ENCODE measurements at regions of chr1 and their contacts with region 1.

Region 1: GRCh38 chr1:107142140-107142542 is 1.3 kb downstream of the NTNG1 start:
- DNase-seq: peak in 3 of 9 donors; percentile 14 to 17 (median 15)
- ATAC-seq: no peak
- H3K4me3 ChIP-seq: peak overlapping the region; percentile 51
- H3K4me3 Mint-ChIP-seq: peak overlapping the region in 9 of 10 donors; percentile 83 to 90 (median 85)
- H3K27ac ChIP-seq: no peak overlapping the region
- H3K27ac Mint-ChIP-seq: no peak overlapping the region
- H3K4me1 ChIP-seq: peaks cover 3 to 4% of the 10 kb centered on the region in 2 donors
- H3K4me1 Mint-ChIP-seq: peaks cover 14 to 27% (median 25%) of the 10 kb centered on the region in 7 donors
- H3K27me3 ChIP-seq: peaks cover 2 to 3% of the 10 kb centered on the region in 2 donors
- H3K27me3 Mint-ChIP-seq: peaks cover 66 to 78% (median 76%) of the 10 kb centered on the region in 5 donors

Region 2: DNA sequence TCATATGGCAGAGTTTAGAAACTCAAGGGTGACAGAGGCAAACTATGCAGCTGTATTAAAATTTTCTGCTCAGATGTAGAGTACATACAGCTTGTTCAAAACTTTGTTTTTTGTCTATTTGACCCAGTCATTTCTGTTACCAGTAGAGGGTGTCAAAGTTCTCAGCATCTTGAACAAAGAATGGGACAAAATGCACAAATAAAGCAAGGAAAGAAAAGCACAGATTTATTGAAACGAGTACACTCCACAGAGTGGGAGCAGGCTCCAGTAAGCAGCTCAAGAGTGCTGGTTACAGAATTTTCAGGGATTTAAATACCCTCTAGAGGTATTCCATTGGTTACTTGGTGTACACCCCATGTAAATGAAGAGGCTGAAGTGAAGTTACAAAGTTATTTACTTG is 94.6 kb before region 1 on chr1:
- CTCF ChIA-PET with region 1: interaction called, 5 read pairs
- POLR2A ChIA-PET with region 1: no interaction called
- intact Hi-C with region 1: loop called (anchors 1 to 2 kb)
- DNase-seq: no peak
- ATAC-seq: no peak
- H3K4me3 ChIP-seq: no peak overlapping the region
- H3K4me3 Mint-ChIP-seq: no peak overlapping the region
- H3K27ac ChIP-seq: no peak overlapping the region
- H3K27ac Mint-ChIP-seq: no peak overlapping the region
- H3K4me1 ChIP-seq: no peaks in the 10 kb centered on the region
- H3K4me1 Mint-ChIP-seq: peaks cover 0 to 2% (median 0%) of the 10 kb centered on the region in 7 donors
- H3K27me3 ChIP-seq: no peaks in the 10 kb centered on the region
- H3K27me3 Mint-ChIP-seq: peaks cover 13 to 22% (median 19%) of the 10 kb centered on the region in 5 donors

Region 3: DNA sequence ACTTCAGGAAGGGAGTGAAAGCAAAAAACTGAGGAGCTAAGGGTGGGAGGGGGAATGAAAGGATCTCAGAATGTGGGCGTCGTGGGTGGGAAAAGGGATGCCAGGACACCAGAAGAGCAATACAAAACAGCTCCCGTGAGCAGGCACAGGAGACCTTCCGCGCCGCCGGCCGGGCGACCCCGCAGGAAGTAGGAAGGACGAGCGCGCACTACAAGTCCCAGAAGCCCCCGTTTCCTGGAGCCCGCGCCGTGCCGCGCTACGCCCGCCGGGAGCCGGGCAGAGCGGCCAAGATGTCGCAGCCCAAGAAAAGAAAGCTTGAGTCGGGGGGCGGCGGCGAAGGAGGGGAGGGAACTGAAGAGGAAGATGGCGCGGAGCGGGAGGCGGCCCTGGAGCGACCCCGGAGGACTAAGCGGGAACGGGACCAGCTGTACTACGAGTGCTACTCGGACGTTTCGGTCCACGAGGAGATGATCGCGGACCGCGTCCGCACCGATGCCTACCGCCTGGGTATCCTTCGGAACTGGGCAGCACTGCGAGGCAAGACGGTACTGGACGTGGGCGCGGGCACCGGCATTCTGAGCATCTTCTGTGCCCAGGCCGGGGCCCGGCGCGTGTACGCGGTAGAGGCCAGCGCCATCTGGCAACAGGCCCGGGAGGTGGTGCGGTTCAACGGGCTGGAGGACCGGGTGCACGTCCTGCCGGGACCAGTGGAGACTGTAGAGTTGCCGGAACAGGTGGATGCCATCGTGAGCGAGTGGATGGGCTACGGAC is 85.5 kb before region 1 on chr1 and contains the start of gene PRMT6:
- CTCF ChIA-PET with region 1: no interaction called
- POLR2A ChIA-PET with region 1: no interaction called
- intact Hi-C with region 1: loop called in 1 of 2 experiments (anchors 2 kb)
- DNase-seq: peak; percentile 62 to 85 (median 82)
- ATAC-seq: peak; percentile 94
- H3K4me3 ChIP-seq: peak within 1 kb of the TSS; percentile 95
- H3K4me3 Mint-ChIP-seq: peak within 1 kb of the TSS; percentile 96 to 100 (median 98)
- H3K27ac ChIP-seq: peak within 1 kb of the TSS; percentile 80
- H3K27ac Mint-ChIP-seq: peak within 1 kb of the TSS; percentile 95 to 98 (median 97)
- H3K4me1 ChIP-seq: peaks cover 11 to 12% of the 10 kb centered on the region in 2 donors
- H3K4me1 Mint-ChIP-seq: peaks cover 19 to 41% (median 29%) of the 10 kb centered on the region in 7 donors
- H3K27me3 ChIP-seq: no peaks in the 10 kb centered on the region
- H3K27me3 Mint-ChIP-seq: no peaks in the 10 kb centered on the region
- total RNA-seq, gene PRMT6: 7.4 to 22.1 (median 17.5) TPM

Region 4: DNA sequence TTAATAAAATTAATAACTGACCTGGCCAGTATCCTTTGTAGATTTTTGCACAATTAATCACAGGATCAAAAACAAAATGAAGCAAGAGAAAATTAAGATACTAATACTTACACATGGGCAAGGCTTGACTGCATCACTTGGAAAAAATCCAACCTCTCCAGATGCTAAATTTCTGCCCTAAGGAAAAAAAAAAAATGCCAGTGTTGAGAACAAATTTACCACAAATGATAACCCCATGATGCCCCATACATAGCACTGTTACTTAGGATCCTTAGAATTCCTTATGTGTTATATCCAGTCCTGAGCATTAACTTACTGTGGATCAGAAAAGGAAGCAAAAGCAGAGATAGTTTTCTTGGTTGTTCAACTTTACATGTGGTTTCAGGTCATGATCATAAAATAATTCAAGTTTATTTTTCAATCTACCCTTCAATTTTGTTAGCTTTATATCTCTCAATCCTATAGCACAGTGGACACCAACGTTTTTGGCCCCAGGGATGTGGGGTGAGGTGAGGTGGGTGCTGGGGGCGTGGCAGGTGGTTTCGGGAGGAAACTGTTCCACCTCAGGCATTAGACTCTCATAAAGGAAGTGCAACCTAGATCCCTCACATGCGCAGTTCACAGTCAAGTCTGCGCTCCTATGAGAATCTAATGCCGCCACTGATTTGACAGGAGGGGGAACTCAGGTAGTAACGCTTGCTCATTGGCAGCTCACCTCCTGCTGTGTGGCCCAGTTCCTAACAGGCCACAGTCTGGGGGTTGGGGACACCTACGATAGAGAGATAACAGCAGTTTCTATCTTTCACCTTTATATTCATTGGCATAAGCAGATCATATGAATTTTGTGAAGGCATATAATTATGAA is 475.5 kb after region 1 on chr1:
- CTCF ChIA-PET with region 1: no interaction called
- POLR2A ChIA-PET with region 1: no interaction called
- intact Hi-C with region 1: no loop called
- DNase-seq: no peak
- ATAC-seq: no peak
- H3K4me3 ChIP-seq: no peak overlapping the region
- H3K4me3 Mint-ChIP-seq: no peak overlapping the region
- H3K27ac ChIP-seq: no peak overlapping the region
- H3K27ac Mint-ChIP-seq: no peak overlapping the region
- H3K4me1 ChIP-seq: no peaks in the 10 kb centered on the region
- H3K4me1 Mint-ChIP-seq: peaks cover 0 to 3% (median 0%) of the 10 kb centered on the region in 7 donors
- H3K27me3 ChIP-seq: no peaks in the 10 kb centered on the region
- H3K27me3 Mint-ChIP-seq: no peaks in the 10 kb centered on the region